Natural killer cell (primary cell): ENCODE measurements at regions of chr5 and their contacts with region 1.

Region 1: GRCh38 chr5:14351845-14352712 is 208.9 kb downstream of the TRIO start:
- DNase-seq: peak; percentile 57 to 82
- ATAC-seq: peak; percentile 90 to 99 (median 99)
- H3K4me3 ChIP-seq: no peak overlapping the region
- H3K4me3 Mint-ChIP-seq: no peak overlapping the region
- H3K27ac ChIP-seq: no peak overlapping the region
- H3K27ac Mint-ChIP-seq: no peak overlapping the region
- H3K4me1 ChIP-seq: peaks cover 10% of the 10 kb centered on the region
- H3K4me1 Mint-ChIP-seq: peaks cover 10 to 15% of the 10 kb centered on the region in 2 donors
- H3K27me3 ChIP-seq: no peaks in the 10 kb centered on the region
- H3K27me3 Mint-ChIP-seq: no peaks in the 10 kb centered on the region
- CTCF ChIP-seq: peak; percentile 90

Region 2: DNA sequence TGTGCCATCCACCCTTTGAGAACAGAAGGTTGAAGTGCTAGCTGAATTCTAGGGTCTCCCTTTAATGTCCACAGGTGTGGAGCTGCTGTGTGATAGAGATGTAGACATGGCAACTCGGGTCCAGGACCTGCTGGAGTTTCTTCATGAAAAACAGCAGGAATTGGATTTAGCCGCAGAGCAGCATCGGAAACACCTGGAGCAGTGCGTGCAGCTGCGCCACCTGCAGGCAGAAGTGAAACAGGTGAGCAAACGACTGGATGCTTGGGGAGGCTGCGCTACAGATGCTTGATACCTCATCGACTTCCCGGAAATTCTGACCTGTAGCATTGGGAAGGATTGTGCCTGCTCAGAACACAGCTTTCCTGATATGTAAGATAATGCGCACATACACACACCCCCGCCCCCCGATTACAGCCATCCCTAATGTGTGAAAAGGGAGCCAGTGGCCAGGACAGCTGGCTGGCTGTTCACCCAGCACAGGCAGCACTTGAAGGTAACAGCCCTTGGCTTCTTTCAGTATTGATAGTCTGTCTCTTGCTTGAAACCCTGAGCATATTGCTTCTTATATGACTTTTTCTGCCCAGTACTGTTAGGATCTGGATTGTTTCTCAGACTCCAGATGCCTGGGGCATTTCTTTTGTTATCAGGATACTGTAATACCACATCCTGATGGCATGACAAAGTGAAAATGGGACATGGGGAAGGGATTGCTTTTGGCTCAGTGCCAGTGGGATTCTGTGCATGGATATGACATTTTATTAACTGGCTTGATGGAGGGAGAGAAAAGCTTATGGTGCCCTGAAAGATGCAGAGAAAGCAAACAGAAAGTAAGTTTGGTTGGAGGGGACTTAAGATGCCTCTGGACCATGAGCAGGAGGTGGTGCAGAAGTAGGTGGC is 12.7 kb after region 1 on chr5:
- intact Hi-C with region 1: loop called (anchors 2 kb)
- DNase-seq: peak in 1 of 2 donors; percentile 38
- ATAC-seq: no peak
- H3K4me3 ChIP-seq: no peak overlapping the region
- H3K4me3 Mint-ChIP-seq: peak overlapping the region; percentile 69
- H3K27ac ChIP-seq: no peak overlapping the region
- H3K27ac Mint-ChIP-seq: peak overlapping the region; percentile 56 to 68
- H3K4me1 ChIP-seq: peaks cover 46% of the 10 kb centered on the region
- H3K4me1 Mint-ChIP-seq: peaks cover 40 to 48% of the 10 kb centered on the region in 2 donors
- H3K27me3 ChIP-seq: no peaks in the 10 kb centered on the region
- H3K27me3 Mint-ChIP-seq: no peaks in the 10 kb centered on the region
- CTCF ChIP-seq: no peak

Region 3: DNA sequence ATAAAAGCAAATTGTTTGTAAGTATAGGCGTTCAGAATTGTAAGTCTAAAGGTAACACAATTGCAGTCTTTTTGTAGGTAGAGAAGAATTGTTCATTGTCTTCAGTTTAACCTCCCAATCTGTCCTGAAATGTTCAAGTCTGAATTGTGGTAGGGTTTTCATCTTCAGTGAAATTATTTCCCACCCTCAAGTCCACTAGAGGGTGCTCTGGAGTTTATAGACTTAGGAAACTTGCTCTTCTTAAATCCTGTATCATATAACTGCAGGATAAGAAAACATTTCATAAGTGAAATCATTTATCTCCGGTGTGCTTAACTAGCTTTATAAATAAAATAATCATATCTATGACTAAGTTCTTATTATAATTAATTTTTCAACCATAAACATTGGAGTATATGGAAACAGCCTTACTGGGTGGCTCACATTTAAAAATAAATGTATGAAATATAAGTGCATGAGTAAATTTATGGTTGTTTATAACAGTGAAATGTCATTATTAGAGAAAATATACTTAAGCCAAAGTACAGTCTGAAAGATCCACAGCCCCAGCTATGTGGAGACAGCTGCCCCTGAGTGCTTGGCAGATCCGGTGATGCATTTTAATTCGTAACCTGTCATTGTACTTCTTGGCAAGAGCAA is 47.1 kb after region 1 on chr5:
- intact Hi-C with region 1: loop called (anchors 2 kb)
- DNase-seq: peak in 1 of 2 donors; percentile 75
- ATAC-seq: peak in 2 of 3 donors; percentile 31 to 50
- H3K4me3 ChIP-seq: no peak overlapping the region
- H3K4me3 Mint-ChIP-seq: no peak overlapping the region
- H3K27ac ChIP-seq: no peak overlapping the region
- H3K27ac Mint-ChIP-seq: no peak overlapping the region
- H3K4me1 ChIP-seq: no peaks in the 10 kb centered on the region
- H3K4me1 Mint-ChIP-seq: peaks cover 3 to 14% of the 10 kb centered on the region in 2 donors
- H3K27me3 ChIP-seq: no peaks in the 10 kb centered on the region
- H3K27me3 Mint-ChIP-seq: no peaks in the 10 kb centered on the region
- CTCF ChIP-seq: peak; percentile 60

Region 4: GRCh38 chr5:14830210-14831005 is 478.3 kb after region 1 on chr5:
- intact Hi-C with region 1: no loop called
- DNase-seq: no peak
- ATAC-seq: peak in 1 of 3 donors; percentile 30
- H3K4me3 ChIP-seq: no peak overlapping the region
- H3K4me3 Mint-ChIP-seq: no peak overlapping the region
- H3K27ac ChIP-seq: no peak overlapping the region
- H3K27ac Mint-ChIP-seq: no peak overlapping the region
- H3K4me1 ChIP-seq: no peaks in the 10 kb centered on the region
- H3K4me1 Mint-ChIP-seq: peaks cover 19 to 23% of the 10 kb centered on the region in 2 donors
- H3K27me3 ChIP-seq: no peaks in the 10 kb centered on the region
- H3K27me3 Mint-ChIP-seq: no peaks in the 10 kb centered on the region
- CTCF ChIP-seq: no peak